Endothelial cell of umbilical vein (primary cell): ENCODE measurements at regions of chr1 and their contacts with region 1.

Region 1: GRCh38 chr1:110460253-110461220 is 9.6 kb downstream of the PROK1 start:
- DNase-seq: peak; percentile 74
- H3K4me3 ChIP-seq: no peak overlapping the region
- H3K27ac ChIP-seq: no peak overlapping the region
- H3K4me1 ChIP-seq: no peaks in the 10 kb centered on the region
- H3K27me3 ChIP-seq: no peaks in the 10 kb centered on the region
- CTCF ChIP-seq: peak; percentile 90 to 91
- POLR2A ChIP-seq: no peak

Region 2: DNA sequence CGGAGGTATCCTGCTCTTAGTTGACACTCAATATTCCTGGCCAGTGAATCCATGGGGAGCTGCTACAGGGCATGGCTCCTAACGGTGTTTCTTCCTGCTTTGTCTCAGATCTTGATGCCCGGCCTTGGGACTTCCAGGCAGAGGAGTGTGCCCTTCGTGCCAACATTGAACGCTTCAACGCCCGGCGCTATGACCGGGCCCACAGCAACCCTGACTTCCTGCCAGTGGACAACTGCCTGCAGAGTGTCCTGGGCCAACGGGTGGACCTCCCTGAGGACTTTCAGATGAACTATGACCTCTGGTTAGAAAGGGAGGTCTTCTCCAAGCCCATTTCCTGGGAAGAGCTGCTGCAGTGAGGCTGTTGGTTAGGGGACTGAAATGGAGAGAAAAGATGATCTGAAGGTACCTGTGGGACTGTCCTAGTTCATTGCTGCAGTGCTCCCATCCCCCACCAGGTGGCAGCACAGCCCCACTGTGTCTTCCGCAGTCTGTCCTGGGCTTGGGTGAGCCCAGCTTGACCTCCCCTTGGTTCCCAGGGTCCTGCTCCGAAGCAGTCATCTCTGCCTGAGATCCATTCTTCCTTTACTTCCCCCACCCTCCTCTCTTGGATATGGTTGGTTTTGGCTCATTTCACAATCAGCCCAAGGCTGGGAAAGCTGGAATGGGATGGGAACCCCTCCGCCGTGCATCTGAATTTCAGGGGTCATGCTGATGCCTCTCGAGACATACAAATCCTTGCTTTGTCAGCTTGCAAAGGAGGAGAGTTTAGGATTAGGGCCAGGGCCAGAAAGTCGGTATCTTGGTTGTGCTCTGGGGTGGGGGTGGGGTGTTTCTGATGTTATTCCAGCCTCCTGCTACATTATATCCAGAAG is 406.7 kb before region 1 on chr1:
- CTCF ChIA-PET with region 1: interaction called, 30 read pairs
- POLR2A ChIA-PET with region 1: no interaction called
- dilution Hi-C with region 1: no loop called
- intact Hi-C with region 1: no loop called
- DNase-seq: peak; percentile 39
- H3K4me3 ChIP-seq: no peak overlapping the region
- H3K27ac ChIP-seq: no peak overlapping the region
- H3K4me1 ChIP-seq: no peaks in the 10 kb centered on the region
- H3K27me3 ChIP-seq: no peaks in the 10 kb centered on the region
- CTCF ChIP-seq: peak; percentile 83 to 97
- POLR2A ChIP-seq: no peak

Region 3: DNA sequence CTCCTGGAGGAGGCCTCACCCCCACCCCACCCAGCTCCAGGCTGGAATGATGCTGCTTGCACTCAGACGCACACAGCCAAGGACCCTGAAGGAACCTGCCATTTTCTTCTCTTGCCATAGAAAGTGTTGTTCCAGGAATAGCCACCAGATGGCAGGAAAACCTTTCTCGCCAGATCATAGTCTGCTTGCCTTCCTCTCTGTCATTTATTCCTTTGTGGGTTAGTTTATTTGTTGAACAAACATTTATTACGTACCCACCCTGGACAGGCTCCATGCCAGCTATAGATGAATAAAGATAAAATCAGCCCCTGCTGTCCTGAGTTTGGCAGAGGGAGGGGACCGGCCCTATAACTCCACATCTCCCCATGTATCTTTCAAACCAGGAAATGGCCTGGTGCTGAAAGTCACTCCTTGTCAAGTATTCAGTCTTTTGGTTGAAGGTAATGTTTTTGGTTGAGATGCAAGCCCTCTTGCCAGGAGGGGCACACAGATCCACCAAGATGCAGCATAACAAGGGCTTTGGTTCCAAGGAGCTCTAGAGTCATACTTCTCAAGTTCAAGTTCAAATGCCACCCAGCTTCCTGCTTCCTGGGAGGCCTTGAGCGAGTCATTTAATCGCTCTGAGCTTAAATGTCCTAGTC is 257.4 kb before region 1 on chr1:
- CTCF ChIA-PET with region 1: interaction called, 211 read pairs
- POLR2A ChIA-PET with region 1: no interaction called
- dilution Hi-C with region 1: no loop called
- intact Hi-C with region 1: loop called (anchors 1 kb)
- DNase-seq: peak; percentile 72
- H3K4me3 ChIP-seq: no peak overlapping the region
- H3K27ac ChIP-seq: no peak overlapping the region
- H3K4me1 ChIP-seq: peaks cover 4% of the 10 kb centered on the region
- H3K27me3 ChIP-seq: no peaks in the 10 kb centered on the region
- CTCF ChIP-seq: peak; percentile 67 to 76
- POLR2A ChIP-seq: no peak

Region 4: DNA sequence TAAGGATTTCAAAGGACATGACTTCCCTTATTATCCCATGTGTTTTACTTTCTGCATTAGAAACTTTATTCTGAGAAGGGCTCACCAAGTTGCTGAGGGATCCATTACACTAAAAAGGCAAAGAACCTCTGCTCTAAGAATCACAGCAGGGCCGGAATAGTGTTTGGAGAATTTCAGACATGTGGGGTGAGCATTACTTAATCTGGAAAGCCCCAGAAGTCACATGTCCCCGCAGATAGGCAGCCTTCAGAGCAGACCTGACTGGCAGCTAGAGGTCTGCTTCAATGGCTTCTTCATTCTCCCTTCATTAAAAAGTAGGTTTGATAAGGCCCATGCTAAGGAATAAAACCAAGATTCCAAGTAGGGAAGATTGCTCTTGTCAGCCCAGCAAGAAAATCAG is 174.0 kb before region 1 on chr1:
- CTCF ChIA-PET with region 1: no interaction called
- POLR2A ChIA-PET with region 1: no interaction called
- dilution Hi-C with region 1: no loop called
- intact Hi-C with region 1: no loop called
- DNase-seq: no peak
- H3K4me3 ChIP-seq: no peak overlapping the region
- H3K27ac ChIP-seq: no peak overlapping the region
- H3K4me1 ChIP-seq: no peaks in the 10 kb centered on the region
- H3K27me3 ChIP-seq: peaks cover 0 to 6% of the 10 kb centered on the region in 2 experiments
- CTCF ChIP-seq: no peak
- POLR2A ChIP-seq: no peak

Region 5: DNA sequence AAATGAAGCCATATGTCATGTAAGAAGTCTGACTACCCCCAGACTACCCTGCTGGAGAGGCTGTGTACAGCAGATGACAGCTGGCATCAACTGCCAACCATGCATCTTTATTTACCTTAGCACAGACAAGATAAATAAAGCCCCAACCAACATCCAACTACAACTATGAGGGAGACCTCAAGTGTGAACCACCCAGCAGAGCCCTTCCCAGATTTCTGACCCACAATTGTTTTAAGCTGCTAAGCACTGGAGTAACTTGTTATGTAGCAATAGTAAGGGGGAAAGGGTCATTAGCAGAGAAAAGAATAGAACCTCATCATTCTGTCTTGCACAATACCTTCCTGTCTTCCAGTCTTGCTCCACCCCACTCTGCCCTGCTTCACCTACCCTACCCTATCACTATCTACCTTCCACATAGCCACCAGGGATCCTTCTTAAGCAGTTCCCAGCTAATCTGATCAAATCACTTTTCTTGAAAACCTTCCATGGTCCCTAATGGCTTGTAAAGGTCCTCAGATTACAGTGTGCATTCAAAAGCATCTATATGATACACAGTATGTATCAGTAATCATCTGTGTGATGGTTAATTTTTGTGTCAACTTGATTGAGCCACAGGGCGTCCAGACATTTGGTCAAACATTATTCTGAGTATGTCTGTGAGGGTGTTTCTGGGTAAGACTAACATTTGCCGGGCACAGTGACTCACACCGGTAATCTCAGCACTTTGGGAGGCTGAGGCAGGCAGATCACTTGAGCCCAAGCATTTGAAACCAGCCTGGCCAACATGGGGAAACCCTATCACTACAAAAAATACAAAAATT is 141.0 kb before region 1 on chr1:
- CTCF ChIA-PET with region 1: interaction called, 34 read pairs
- POLR2A ChIA-PET with region 1: no interaction called
- dilution Hi-C with region 1: no loop called
- intact Hi-C with region 1: no loop called
- DNase-seq: no peak
- H3K4me3 ChIP-seq: no peak overlapping the region
- H3K27ac ChIP-seq: no peak overlapping the region
- H3K4me1 ChIP-seq: no peaks in the 10 kb centered on the region
- H3K27me3 ChIP-seq: no peaks in the 10 kb centered on the region
- CTCF ChIP-seq: no peak
- POLR2A ChIP-seq: no peak

Region 6: DNA sequence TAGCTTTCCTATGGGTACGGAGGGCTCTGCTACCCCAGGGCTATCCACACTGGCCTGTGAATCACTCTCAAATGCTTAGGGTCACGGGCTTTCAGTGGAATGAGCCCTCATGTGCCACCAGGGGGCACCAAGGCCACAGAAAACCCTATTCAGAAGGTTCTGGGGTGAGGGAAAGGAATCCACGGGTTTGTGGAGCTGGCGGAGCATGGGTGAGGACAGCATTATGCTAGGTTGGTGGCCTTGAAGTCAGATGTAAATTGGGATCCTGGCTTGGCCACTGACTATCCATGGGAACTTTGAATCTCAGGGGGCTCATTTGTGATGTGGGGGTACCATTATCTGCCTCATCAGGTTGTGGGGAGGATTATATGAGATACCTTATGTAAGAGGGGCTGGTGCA is 48.0 kb before region 1 on chr1:
- CTCF ChIA-PET with region 1: interaction called, 118 read pairs
- POLR2A ChIA-PET with region 1: no interaction called
- dilution Hi-C with region 1: no loop called
- intact Hi-C with region 1: loop called (anchors 1 kb)
- DNase-seq: peak; percentile 53
- H3K4me3 ChIP-seq: no peak overlapping the region
- H3K27ac ChIP-seq: no peak overlapping the region
- H3K4me1 ChIP-seq: peaks cover 4% of the 10 kb centered on the region
- H3K27me3 ChIP-seq: peaks cover 7 to 8% of the 10 kb centered on the region in 2 experiments
- CTCF ChIP-seq: peak; percentile 74 to 76
- POLR2A ChIP-seq: no peak

Region 7: GRCh38 chr1:110471163-110471562 is 10.6 kb after region 1 on chr1:
- CTCF ChIA-PET with region 1: interaction called, 17 read pairs
- POLR2A ChIA-PET with region 1: no interaction called
- dilution Hi-C with region 1: no loop called
- intact Hi-C with region 1: no loop called
- DNase-seq: no peak
- H3K4me3 ChIP-seq: no peak overlapping the region
- H3K27ac ChIP-seq: no peak overlapping the region
- H3K4me1 ChIP-seq: no peaks in the 10 kb centered on the region
- H3K27me3 ChIP-seq: peaks cover 0 to 4% of the 10 kb centered on the region in 2 experiments
- CTCF ChIP-seq: no peak
- POLR2A ChIP-seq: no peak